ENCODE measurements at regions of chr10 and their contacts with region 1.

Region 1: DNA sequence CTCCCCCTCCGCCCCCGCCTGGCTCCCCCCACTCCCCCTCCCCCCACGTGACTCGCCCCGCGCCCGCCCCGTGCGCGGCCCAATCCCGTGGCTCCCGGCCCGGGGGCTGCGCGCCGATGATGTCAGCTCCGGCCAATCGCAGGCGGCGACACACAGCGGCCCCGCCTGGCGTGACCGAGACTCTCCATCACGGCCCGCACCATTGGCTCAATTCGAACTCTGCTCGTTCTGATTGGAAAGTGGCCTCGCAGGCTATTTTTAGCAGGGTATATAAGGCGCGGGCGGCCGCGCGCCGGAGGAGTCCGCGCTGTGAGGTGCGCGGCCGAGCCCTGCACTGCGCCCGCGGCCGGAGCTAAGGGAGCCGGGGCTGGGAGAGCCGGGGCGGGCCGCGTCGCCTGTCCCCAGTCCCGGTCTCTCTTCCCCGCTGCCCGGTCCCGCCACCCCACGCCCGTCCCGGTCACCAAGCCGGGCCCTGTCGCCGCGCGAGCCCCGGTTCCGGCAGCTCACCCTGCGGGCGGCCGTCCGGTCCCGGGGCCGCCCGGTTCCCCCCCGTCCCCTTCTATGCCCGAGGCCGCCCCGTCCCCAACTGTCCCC is 345 bp upstream of the KLF6 start:
- DNase-seq: peak; percentile 90
- ATAC-seq: peak; percentile 66
- H3K4me3 ChIP-seq: peak overlapping the region; percentile 78
- H3K27ac ChIP-seq: peak overlapping the region; percentile 96
- H3K4me1 ChIP-seq: peaks cover 14% of the 10 kb centered on the region
- H3K27me3 ChIP-seq: no peaks in the 10 kb centered on the region
- CTCF ChIP-seq: no peak
- EP300 ChIP-seq: 0 out of 4 replicates have a peak, but pooled peaks of 1 of the 2 experiments have one; percentile 4
- POLR2A ChIP-seq: peak; percentile 88
- RAD21 ChIP-seq: no peak

Region 2: GRCh38 chr10:3213208-3213607 is 572.1 kb before region 1 on chr10:
- CTCF ChIA-PET with region 1: no interaction called
- POLR2A ChIA-PET with region 1: no interaction called
- RAD21 ChIA-PET with region 1: no interaction called
- SMC1A ChIA-PET with region 1: no interaction called
- in situ Hi-C with region 1: no loop called
- intact Hi-C with region 1: no loop called
- DNase-seq: no peak
- ATAC-seq: no peak
- H3K4me3 ChIP-seq: no peak overlapping the region
- H3K27ac ChIP-seq: no peak overlapping the region
- H3K4me1 ChIP-seq: no peaks in the 10 kb centered on the region
- H3K27me3 ChIP-seq: peaks cover 0 to 1% of the 10 kb centered on the region in 2 experiments; a peak in 2 of 4 replicates
- CTCF ChIP-seq: no peak
- EP300 ChIP-seq: no peak
- POLR2A ChIP-seq: no peak
- RAD21 ChIP-seq: no peak

Region 3: GRCh38 chr10:3239066-3239919 is 546.1 kb before region 1 on chr10:
- CTCF ChIA-PET with region 1: interaction called, 4 read pairs
- POLR2A ChIA-PET with region 1: no interaction called
- RAD21 ChIA-PET with region 1: no interaction called
- SMC1A ChIA-PET with region 1: no interaction called
- in situ Hi-C with region 1: no loop called
- intact Hi-C with region 1: loop called (anchors 2 kb)
- DNase-seq: no peak
- ATAC-seq: peak; percentile 96
- H3K4me3 ChIP-seq: no peak overlapping the region
- H3K27ac ChIP-seq: no peak overlapping the region
- H3K4me1 ChIP-seq: no peaks in the 10 kb centered on the region
- H3K27me3 ChIP-seq: peaks cover 1 to 3% of the 10 kb centered on the region in 2 experiments; a peak in 1 of 4 replicates
- CTCF ChIP-seq: peak; percentile 86 to 93 (median 91)
- EP300 ChIP-seq: no peak
- POLR2A ChIP-seq: no peak
- RAD21 ChIP-seq: peak; percentile 97

Region 4: GRCh38 chr10:3270577-3271316 is 514.6 kb before region 1 on chr10:
- CTCF ChIA-PET with region 1: no interaction called
- POLR2A ChIA-PET with region 1: no interaction called
- RAD21 ChIA-PET with region 1: no interaction called
- SMC1A ChIA-PET with region 1: no interaction called
- in situ Hi-C with region 1: no loop called
- intact Hi-C with region 1: no loop called
- DNase-seq: no peak
- ATAC-seq: no peak
- H3K4me3 ChIP-seq: no peak overlapping the region
- H3K27ac ChIP-seq: no peak overlapping the region
- H3K4me1 ChIP-seq: no peaks in the 10 kb centered on the region
- H3K27me3 ChIP-seq: no peaks in the 10 kb centered on the region
- CTCF ChIP-seq: no peak
- EP300 ChIP-seq: no peak
- POLR2A ChIP-seq: no peak
- RAD21 ChIP-seq: no peak

Region 5: DNA sequence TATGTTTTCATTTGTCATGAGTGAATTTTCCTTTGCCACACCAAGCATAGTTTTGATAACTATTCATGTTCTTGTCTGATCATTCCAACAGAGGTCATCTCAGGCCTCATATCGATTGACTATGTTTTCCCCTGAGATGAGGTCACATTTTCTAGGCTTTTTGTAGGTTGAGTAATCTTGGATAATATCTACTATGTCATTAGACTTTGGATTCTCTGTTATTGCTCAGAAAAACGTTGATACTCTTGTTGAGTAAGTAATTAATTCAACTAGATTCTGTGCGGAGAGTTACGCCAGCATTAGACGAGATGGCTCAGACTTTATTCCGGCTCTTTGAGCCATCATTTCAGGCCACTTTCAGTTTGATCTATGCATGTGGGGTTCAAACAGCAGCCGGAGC is 58.1 kb before region 1 on chr10:
- CTCF ChIA-PET with region 1: no interaction called
- POLR2A ChIA-PET with region 1: no interaction called
- RAD21 ChIA-PET with region 1: no interaction called
- SMC1A ChIA-PET with region 1: no interaction called
- in situ Hi-C with region 1: no loop called
- intact Hi-C with region 1: no loop called
- DNase-seq: no peak
- ATAC-seq: no peak
- H3K4me3 ChIP-seq: no peak overlapping the region
- H3K27ac ChIP-seq: no peak overlapping the region
- H3K4me1 ChIP-seq: no peaks in the 10 kb centered on the region
- H3K27me3 ChIP-seq: no peaks in the 10 kb centered on the region; a peak in 2 of 4 replicates
- CTCF ChIP-seq: no peak
- EP300 ChIP-seq: no peak
- POLR2A ChIP-seq: no peak
- RAD21 ChIP-seq: no peak

Region 6: DNA sequence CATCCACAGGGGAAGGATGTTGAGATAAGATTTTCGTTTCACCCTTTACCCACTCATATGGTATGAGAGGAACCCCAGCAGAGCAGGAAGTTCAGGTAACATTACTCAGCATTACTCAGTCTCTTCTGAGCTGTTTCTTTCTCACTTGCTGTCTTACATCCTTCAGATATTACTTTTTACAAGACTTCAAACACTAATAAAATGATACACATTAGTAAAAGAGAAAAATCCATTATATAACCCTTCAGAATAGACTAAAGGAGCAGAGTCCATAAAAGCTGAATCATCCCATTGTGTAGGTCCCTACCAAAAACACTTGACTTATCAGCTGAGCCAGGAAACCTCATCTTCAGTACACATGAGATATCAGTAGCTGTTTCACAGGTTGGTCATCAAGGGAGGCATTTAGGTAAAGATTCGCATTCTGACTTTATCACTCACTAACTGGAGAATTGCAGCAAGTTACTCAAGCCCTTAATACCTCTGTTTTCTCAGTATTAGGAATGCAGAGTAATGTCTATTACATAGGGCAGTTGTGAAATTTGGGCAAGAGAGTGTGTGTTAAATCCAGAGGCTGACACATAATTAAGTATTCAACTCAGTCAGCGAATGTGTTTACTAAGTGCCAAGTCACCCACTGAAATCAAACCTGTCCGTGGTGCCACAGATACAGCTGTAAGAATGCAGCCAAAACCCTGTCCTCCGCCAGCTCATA is 45.0 kb before region 1 on chr10:
- CTCF ChIA-PET with region 1: interaction called, 4 read pairs
- POLR2A ChIA-PET with region 1: interaction called, 6 read pairs
- RAD21 ChIA-PET with region 1: interaction called, 4 read pairs
- SMC1A ChIA-PET with region 1: interaction called, 11 read pairs
- in situ Hi-C with region 1: no loop called
- intact Hi-C with region 1: loop called (anchors 2 kb)
- DNase-seq: no peak
- ATAC-seq: peak; percentile 72
- H3K4me3 ChIP-seq: no peak overlapping the region
- H3K27ac ChIP-seq: no peak overlapping the region
- H3K4me1 ChIP-seq: peaks cover 5% of the 10 kb centered on the region; the same call in 1 of the 2 replicates
- H3K27me3 ChIP-seq: no peaks in the 10 kb centered on the region
- CTCF ChIP-seq: no peak
- EP300 ChIP-seq: no peak
- POLR2A ChIP-seq: no peak
- RAD21 ChIP-seq: no peak

Region 7: GRCh38 chr10:3811291-3811870 is 26.0 kb after region 1 on chr10:
- CTCF ChIA-PET with region 1: interaction called, 6 read pairs
- POLR2A ChIA-PET with region 1: interaction called, 54 read pairs
- RAD21 ChIA-PET with region 1: interaction called, 83 read pairs
- SMC1A ChIA-PET with region 1: interaction called, 50 read pairs
- in situ Hi-C with region 1: no loop called
- intact Hi-C with region 1: loop called (anchors 1 kb)
- DNase-seq: peak; percentile 76
- ATAC-seq: peak; percentile 87
- H3K4me3 ChIP-seq: peak overlapping the region; percentile 55; the same call in 1 of the 2 replicates
- H3K27ac ChIP-seq: peak overlapping the region; percentile 82
- H3K4me1 ChIP-seq: peaks cover 42% of the 10 kb centered on the region
- H3K27me3 ChIP-seq: no peaks in the 10 kb centered on the region
- CTCF ChIP-seq: no peak
- EP300 ChIP-seq: peak; percentile 62 to 69; a peak in 3 of 4 replicates
- POLR2A ChIP-seq: peak; percentile 24; the same call in 1 of the 2 replicates
- RAD21 ChIP-seq: peak; percentile 26; the same call in 1 of the 2 replicates

Region 8: GRCh38 chr10:3867454-3868270 is 82.3 kb after region 1 on chr10:
- CTCF ChIA-PET with region 1: interaction called, 6 read pairs
- POLR2A ChIA-PET with region 1: interaction called, 51 read pairs
- RAD21 ChIA-PET with region 1: interaction called, 35 read pairs
- SMC1A ChIA-PET with region 1: interaction called, 68 read pairs
- in situ Hi-C with region 1: no loop called
- intact Hi-C with region 1: no loop called
- DNase-seq: no peak
- ATAC-seq: no peak
- H3K4me3 ChIP-seq: no peak overlapping the region
- H3K27ac ChIP-seq: no peak overlapping the region
- H3K4me1 ChIP-seq: peaks cover 39% of the 10 kb centered on the region
- H3K27me3 ChIP-seq: no peaks in the 10 kb centered on the region
- CTCF ChIP-seq: no peak
- EP300 ChIP-seq: no peak
- POLR2A ChIP-seq: no peak
- RAD21 ChIP-seq: no peak

Region 9: DNA sequence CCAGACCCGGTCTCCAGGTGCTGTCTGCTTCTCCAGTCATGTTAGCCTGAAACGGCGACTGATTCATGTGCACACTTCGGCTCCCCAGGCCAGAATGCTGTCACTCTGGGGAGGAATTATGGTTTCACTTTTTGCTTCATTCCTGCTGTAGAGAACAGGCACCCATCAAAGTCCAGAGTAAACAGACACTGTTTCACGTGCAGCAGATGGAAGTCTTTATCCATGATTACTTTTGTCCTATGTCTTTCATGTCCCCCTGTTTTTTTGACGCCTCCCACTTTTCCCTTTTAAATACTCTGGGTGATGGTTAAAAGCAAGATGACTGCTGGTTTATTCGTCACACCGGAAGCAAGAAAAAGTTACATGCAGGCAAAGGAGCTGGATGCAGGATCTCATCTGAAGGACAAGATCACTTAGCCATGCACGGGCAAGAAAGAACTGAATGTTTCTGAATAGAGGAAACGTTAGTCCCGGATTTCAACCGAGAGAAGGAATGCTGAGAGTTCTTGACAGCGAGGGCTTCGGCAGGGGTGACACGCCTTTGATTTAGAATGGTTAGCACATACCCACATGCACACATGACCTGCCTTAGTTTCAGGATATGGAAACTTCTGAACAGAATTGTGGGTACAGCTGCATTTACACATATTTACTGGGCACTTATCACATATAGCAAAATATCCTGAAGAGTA is 249.7 kb after region 1 on chr10:
- CTCF ChIA-PET with region 1: no interaction called
- POLR2A ChIA-PET with region 1: no interaction called
- RAD21 ChIA-PET with region 1: no interaction called
- SMC1A ChIA-PET with region 1: no interaction called
- in situ Hi-C with region 1: loop called (anchors 5 kb)
- intact Hi-C with region 1: loop called (anchors 10 kb)
- DNase-seq: no peak
- ATAC-seq: 0 out of 3 replicates have a peak, but pooled peaks have one; percentile 21
- H3K4me3 ChIP-seq: no peak overlapping the region
- H3K27ac ChIP-seq: no peak overlapping the region
- H3K4me1 ChIP-seq: peaks cover 24% of the 10 kb centered on the region
- H3K27me3 ChIP-seq: no peaks in the 10 kb centered on the region
- CTCF ChIP-seq: no peak
- EP300 ChIP-seq: no peak
- POLR2A ChIP-seq: no peak
- RAD21 ChIP-seq: no peak

Measured in GM12878 (cell line).